ENCODE measurements at regions of chr1 and their contacts with region 1.

Region 1: GRCh38 chr1:6523566-6523965 is 30.7 kb downstream of the NOL9 start:
- DNase-seq: peak; percentile 37
- ATAC-seq: peak; percentile 38; the same call in 1 of the 2 replicates
- H3K4me3 ChIP-seq: no peak overlapping the region
- H3K27ac ChIP-seq: no peak overlapping the region
- H3K4me1 ChIP-seq: peaks cover 5% of the 10 kb centered on the region; the same call in 1 of the 2 replicates
- H3K27me3 ChIP-seq: no peaks in the 10 kb centered on the region
- CTCF ChIP-seq: peak; percentile 60
- POLR2A ChIP-seq: no peak
- RAD21 ChIP-seq: peak; percentile 64

Region 2: GRCh38 chr1:6538956-6539355 is 15.4 kb after region 1 on chr1:
- CTCF ChIA-PET with region 1: interaction called, 6 read pairs
- POLR2A ChIA-PET with region 1: no interaction called
- dilution Hi-C with region 1: no loop called
- in situ Hi-C with region 1: no loop called
- intact Hi-C with region 1: loop called (anchors 2 kb)
- DNase-seq: peak; percentile 83
- ATAC-seq: peak; percentile 93
- H3K4me3 ChIP-seq: no peak overlapping the region
- H3K27ac ChIP-seq: no peak overlapping the region
- H3K4me1 ChIP-seq: no peaks in the 10 kb centered on the region
- H3K27me3 ChIP-seq: no peaks in the 10 kb centered on the region
- CTCF ChIP-seq: no peak
- POLR2A ChIP-seq: no peak
- RAD21 ChIP-seq: no peak

Measured in IMR-90 (cell line).